Posterior vena cava (tissue), 2 donors: ENCODE measurements at regions of chr17 and their contacts with region 1.

Region 1: DNA sequence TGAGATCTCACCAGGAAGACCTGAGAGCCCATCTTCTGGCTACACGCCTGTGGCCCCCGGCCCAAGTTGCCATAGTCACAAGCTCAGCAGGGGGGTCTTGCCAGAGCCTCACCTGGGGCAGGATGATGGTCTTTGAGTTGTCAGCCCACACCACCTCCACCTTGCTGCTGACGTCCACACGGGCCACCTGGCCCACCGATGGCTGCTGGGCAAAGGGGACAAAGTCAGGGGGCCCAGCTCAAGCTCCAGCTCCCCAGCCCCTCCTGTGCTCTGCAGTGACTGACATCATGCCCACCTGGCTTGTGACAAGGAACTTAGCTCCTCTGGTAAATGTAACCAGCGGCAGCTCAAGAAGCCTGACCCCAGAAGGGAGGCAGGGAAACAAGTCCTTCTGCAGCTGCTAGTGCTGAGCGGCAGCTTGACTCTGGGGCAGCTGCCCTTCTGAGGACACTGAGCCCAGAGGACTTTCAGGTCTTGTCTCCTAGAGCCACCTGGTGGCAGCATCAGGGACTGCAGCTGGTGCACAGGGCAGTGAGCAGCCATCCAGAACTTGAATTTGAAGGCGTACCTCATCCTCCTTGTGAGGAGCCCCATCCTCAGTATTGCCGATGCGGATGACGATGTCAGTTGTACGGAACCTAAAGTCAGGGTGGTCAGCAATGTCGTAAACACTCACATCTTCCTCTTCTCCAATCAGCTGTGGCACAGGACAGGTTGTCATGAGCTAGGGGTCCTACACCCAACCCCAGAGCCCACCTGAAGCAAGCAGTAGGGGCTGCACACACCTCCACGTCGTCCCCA is 13.5 kb downstream of the SPHK1 start:
- DNase-seq: peak; percentile 97

Region 2: GRCh38 chr17:76121932-76122430 is 275.9 kb before region 1 on chr17:
- intact Hi-C with region 1: loop called in 1 of 2 experiments (anchors 10 kb)
- DNase-seq: no peak

Region 3: GRCh38 chr17:76304226-76305134 is 93.4 kb before region 1 on chr17:
- intact Hi-C with region 1: loop called (anchors 5 kb)
- DNase-seq: peak; percentile 60

Region 4: DNA sequence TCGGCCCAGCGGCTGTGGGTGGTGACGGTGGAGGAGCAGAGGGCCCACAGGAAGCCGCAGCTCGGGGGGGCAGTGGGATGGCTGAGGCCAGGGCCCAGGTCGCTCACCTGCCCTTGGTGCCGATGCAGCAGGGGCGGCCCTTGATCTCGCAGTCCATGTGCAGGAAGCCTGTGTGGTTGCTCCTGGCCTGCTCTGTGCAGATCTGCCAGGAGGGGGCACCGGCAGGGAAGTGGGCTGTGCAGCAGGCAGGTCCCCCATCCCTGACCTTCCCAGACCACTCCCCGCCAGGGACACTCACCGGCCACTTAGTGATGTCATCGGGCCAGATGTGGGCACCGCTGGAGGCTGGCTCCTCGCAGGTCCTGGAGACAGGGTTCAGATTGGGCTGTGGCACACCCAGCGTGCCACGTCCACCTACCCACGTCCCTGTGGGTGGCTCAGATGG is 75.7 kb after region 1 on chr17:
- intact Hi-C with region 1: no loop called
- DNase-seq: peak; percentile 77